ENCODE measurements at regions of chr4 and their contacts with region 1.

Region 1: GRCh38 chr4:39697740-39698423 is at the start of gene UBE2K:
- DNase-seq: peak; percentile 81
- H3K4me3 ChIP-seq: peak within 1 kb of the TSS; percentile 39 to 97 (median 90)
- H3K27ac ChIP-seq: peak within 1 kb of the TSS; percentile 80
- H3K4me1 ChIP-seq: peaks cover 21% of the 10 kb centered on the region
- H3K27me3 ChIP-seq: no peaks in the 10 kb centered on the region
- CTCF ChIP-seq: no peak
- POLR2A ChIP-seq: peak; percentile 84
- total RNA-seq, gene UBE2K: 90.3 and 97.8 TPM in 2 replicates

Region 2: DNA sequence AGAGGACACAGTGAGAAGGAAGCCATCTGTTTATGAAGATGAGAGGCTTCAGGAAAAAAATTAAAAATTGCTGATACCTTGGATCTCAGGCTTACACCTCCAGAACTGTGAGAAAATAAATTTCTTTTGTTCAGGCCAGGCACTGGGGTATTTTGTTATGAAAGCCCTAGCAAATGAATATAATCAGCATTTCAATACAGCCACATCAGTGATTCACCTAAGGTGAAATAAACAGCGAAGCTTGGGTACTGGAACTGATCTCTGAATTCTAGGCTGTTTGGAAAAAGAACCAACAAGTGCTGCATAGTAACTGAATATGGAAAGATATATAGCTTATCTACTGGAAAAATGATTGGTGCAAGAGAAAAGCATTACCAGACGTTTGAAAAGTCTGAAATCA is 191.3 kb after region 1 on chr4:
- CTCF ChIA-PET with region 1: no interaction called
- POLR2A ChIA-PET with region 1: no interaction called
- dilution Hi-C with region 1: no loop called
- intact Hi-C with region 1: loop called (anchors 5 kb)
- DNase-seq: no peak
- H3K4me3 ChIP-seq: no peak overlapping the region
- H3K27ac ChIP-seq: no peak overlapping the region
- H3K4me1 ChIP-seq: no peaks in the 10 kb centered on the region
- H3K27me3 ChIP-seq: no peaks in the 10 kb centered on the region
- CTCF ChIP-seq: no peak
- POLR2A ChIP-seq: no peak

Region 3: GRCh38 chr4:39908284-39908683 is 210.4 kb after region 1 on chr4:
- CTCF ChIA-PET with region 1: no interaction called
- POLR2A ChIA-PET with region 1: no interaction called
- dilution Hi-C with region 1: no loop called
- intact Hi-C with region 1: no loop called
- DNase-seq: no peak
- H3K4me3 ChIP-seq: no peak overlapping the region
- H3K27ac ChIP-seq: no peak overlapping the region
- H3K4me1 ChIP-seq: no peaks in the 10 kb centered on the region
- H3K27me3 ChIP-seq: no peaks in the 10 kb centered on the region
- CTCF ChIP-seq: no peak
- POLR2A ChIP-seq: no peak

Region 4: GRCh38 chr4:39977489-39978377 is 279.9 kb after region 1 on chr4 and contains the start of gene PDS5A:
- CTCF ChIA-PET with region 1: interaction called, 3 read pairs
- POLR2A ChIA-PET with region 1: no interaction called
- dilution Hi-C with region 1: no loop called
- intact Hi-C with region 1: loop called (anchors 1 kb)
- DNase-seq: peak; percentile 88
- H3K4me3 ChIP-seq: peak within 1 kb of the TSS; percentile 62 to 83 (median 67)
- H3K27ac ChIP-seq: peak within 1 kb of the TSS; percentile 74
- H3K4me1 ChIP-seq: peaks cover 15% of the 10 kb centered on the region
- H3K27me3 ChIP-seq: no peaks in the 10 kb centered on the region
- CTCF ChIP-seq: peak; percentile 77 to 95
- POLR2A ChIP-seq: peak; percentile 78
- total RNA-seq, gene PDS5A: 77.8 and 80.8 TPM in 2 replicates